ENCODE measurements at regions of chr19 and their contacts with region 1.

Region 1: DNA sequence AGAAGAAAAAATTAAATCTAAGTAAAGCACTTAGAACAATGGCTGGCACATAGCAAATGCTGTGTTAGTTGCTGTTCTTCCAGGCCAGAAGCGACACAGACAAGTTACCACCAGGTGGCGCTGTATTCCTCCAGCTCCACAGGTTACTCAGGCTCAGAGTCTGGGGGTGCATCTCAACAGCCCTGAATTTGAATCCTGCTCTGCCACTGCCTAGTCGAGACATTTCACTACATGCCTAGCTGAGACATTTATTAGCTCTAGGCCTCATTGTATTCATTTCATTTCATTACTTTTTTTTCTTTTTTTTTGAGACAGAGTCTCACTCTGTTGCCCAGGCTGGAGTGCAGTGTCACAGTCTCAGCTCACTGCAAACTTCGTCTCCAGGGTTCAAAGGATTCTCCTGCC is 16.4 kb upstream of the CYP2B6 start:
- DNase-seq: peak; percentile 81
- H3K4me3 ChIP-seq: no peak overlapping the region
- H3K27ac ChIP-seq: no peak overlapping the region
- H3K4me1 ChIP-seq: no peaks in the 10 kb centered on the region
- H3K27me3 ChIP-seq: no peaks in the 10 kb centered on the region
- CTCF ChIP-seq: peak; percentile 92

Region 2: DNA sequence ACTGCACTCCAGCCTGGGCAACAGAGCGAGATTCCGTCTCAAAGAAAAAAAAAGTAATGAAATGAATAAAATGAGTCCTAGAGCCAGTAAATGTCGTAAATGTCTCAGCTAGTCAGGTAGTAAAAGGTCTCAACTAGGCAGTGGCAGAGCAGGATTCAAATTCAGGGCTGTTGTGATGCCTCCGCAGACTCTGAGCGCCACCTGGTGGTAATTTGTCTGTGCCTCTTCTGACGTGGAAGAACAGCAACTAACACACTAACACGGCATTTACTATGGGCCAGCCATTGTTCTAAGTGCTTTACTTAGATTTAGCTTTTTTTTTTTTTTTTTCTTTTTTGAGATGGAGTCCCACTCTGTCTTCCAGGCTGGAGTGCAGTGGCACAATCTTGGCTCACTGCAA is 169.8 kb after region 1 on chr19:
- intact Hi-C with region 1: loop called (anchors 5 kb)
- DNase-seq: peak; percentile 94
- H3K4me3 ChIP-seq: no peak overlapping the region
- H3K27ac ChIP-seq: no peak overlapping the region
- H3K4me1 ChIP-seq: no peaks in the 10 kb centered on the region
- H3K27me3 ChIP-seq: no peaks in the 10 kb centered on the region
- CTCF ChIP-seq: peak; percentile 81

Region 3: DNA sequence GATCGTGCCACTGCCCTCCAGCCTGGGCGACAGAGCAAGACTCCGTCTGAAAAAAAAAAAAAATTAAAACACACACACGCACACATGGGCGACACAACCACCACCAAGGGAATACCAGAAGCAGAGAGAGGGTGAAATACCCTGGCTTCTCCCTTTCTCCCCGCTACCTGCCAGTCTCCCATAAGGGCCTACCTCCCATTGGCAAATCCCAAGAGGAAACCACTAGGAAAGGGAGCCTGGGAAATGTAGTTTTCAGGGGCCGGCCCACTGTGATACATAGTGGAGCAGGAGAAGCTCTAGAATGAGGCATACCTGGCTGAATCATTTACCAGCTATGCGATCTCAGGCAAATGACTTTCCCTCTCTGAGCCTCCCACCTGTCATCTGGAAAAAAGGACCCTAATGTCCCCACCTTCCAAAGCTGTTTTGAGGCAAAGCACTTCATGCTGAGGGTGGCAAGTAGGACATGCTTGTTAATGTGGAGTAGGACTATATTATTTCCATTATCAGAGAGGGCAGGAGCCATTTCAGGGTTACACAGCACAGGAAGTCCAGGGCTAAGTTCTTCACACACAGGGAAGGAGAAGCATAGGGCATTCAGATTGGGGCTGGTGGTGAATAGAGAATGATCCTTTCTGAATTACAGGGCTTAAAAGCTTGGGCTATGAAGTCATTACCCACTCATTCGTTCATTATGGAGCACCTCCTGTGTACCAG is 275.2 kb after region 1 on chr19:
- intact Hi-C with region 1: loop called (anchors 10 kb)
- DNase-seq: no peak
- H3K4me3 ChIP-seq: no peak overlapping the region
- H3K27ac ChIP-seq: no peak overlapping the region
- H3K4me1 ChIP-seq: no peaks in the 10 kb centered on the region
- H3K27me3 ChIP-seq: no peaks in the 10 kb centered on the region
- CTCF ChIP-seq: no peak